Caco-2 (cell line): ENCODE measurements at regions of chr1 and their contacts with region 1.

Region 1: GRCh38 chr1:43991476-43992231 is at the start of gene CCDC24:
- DNase-seq: peak; percentile 84
- H3K4me3 ChIP-seq: peak within 1 kb of the TSS; percentile 57
- H3K4me3 Mint-ChIP-seq: peak within 1 kb of the TSS; percentile 94
- H3K27ac Mint-ChIP-seq: peak within 1 kb of the TSS; percentile 91
- H3K4me1 ChIP-seq: peaks cover 6% of the 10 kb centered on the region; the same call in 1 of the 2 replicates
- H3K4me1 Mint-ChIP-seq: peaks cover 18% of the 10 kb centered on the region
- H3K27me3 ChIP-seq: no peaks in the 10 kb centered on the region
- H3K27me3 Mint-ChIP-seq: no peaks in the 10 kb centered on the region
- CTCF ChIP-seq: no peak
- total RNA-seq, gene CCDC24: 5.1 and 5.2 TPM in 2 replicates

Region 2: DNA sequence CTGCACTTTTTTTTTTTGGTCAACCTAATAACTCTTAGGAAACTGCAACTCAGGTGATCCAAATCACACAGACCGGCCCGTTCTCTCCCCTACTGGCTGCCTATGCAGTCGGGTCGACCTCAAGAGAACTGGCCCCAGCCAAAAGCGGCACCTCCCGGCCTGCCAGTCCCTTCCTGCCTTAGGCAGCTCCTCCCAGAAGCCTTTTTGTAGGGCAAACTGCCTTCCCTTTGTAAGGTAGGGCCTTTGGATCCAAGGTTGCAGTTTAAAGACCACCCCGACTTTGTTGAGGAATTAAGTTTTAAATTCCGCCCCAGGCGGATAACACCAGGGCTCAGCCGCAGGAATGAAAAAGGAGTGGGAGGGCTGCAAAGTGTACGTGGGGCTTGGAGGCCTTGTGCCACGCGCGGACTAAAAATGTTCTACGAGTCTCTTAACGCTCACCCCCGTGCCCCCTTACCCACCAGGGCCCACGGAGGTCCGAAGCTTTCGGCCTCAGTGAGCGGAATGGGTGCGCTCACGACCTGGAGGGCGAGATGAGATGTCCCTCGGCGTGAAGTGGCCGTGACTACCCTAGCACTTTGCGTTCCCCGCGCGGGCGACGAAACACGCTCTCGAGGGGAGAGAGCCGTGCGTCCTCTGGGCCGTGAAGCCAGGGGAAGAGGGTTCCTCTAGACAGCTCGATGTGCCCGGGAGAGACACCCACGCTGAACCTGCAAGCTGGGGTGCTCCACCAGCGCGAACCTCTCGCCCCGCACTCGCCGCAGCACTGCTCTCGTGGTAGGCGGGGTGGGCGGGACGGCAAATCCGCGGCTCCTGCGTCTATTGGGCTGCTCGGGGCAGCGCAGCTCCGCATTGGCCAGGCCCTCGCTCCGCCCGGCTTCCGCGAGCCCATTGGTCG is 284.8 kb before region 1 on chr1:
- CTCF ChIA-PET with region 1: no interaction called
- POLR2A ChIA-PET with region 1: no interaction called
- intact Hi-C with region 1: no loop called
- DNase-seq: peak; percentile 89 to 92
- H3K4me3 ChIP-seq: peak overlapping the region; percentile 67
- H3K4me3 Mint-ChIP-seq: peak overlapping the region; percentile 81
- H3K27ac Mint-ChIP-seq: no peak overlapping the region
- H3K4me1 ChIP-seq: peaks cover 9% of the 10 kb centered on the region
- H3K4me1 Mint-ChIP-seq: peaks cover 7% of the 10 kb centered on the region
- H3K27me3 ChIP-seq: no peaks in the 10 kb centered on the region
- H3K27me3 Mint-ChIP-seq: no peaks in the 10 kb centered on the region
- CTCF ChIP-seq: no peak

Region 3: DNA sequence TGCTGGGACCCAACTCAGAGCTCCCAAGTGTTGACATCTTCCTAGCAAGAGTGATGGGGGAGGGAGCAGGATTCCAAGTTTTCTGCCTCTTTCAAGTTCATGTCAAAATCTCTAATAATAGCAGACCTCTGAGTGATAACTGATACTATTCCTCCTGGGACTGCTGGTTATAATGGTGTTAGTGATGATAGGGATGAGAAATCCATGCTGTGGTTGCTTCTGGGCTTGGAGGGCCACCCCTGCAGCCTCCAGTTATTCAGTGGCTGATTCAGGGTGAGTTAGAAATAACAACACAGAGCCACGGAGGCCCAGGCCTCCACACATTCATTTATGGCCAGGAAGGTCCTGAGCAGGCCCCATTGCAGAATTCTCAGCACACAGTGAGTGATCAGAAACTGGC is 98.6 kb before region 1 on chr1:
- CTCF ChIA-PET with region 1: no interaction called
- POLR2A ChIA-PET with region 1: no interaction called
- intact Hi-C with region 1: no loop called
- DNase-seq: no peak
- H3K4me3 ChIP-seq: no peak overlapping the region
- H3K4me3 Mint-ChIP-seq: no peak overlapping the region
- H3K27ac Mint-ChIP-seq: no peak overlapping the region
- H3K4me1 ChIP-seq: no peaks in the 10 kb centered on the region
- H3K4me1 Mint-ChIP-seq: no peaks in the 10 kb centered on the region
- H3K27me3 ChIP-seq: no peaks in the 10 kb centered on the region
- H3K27me3 Mint-ChIP-seq: no peaks in the 10 kb centered on the region
- CTCF ChIP-seq: no peak

Region 4: DNA sequence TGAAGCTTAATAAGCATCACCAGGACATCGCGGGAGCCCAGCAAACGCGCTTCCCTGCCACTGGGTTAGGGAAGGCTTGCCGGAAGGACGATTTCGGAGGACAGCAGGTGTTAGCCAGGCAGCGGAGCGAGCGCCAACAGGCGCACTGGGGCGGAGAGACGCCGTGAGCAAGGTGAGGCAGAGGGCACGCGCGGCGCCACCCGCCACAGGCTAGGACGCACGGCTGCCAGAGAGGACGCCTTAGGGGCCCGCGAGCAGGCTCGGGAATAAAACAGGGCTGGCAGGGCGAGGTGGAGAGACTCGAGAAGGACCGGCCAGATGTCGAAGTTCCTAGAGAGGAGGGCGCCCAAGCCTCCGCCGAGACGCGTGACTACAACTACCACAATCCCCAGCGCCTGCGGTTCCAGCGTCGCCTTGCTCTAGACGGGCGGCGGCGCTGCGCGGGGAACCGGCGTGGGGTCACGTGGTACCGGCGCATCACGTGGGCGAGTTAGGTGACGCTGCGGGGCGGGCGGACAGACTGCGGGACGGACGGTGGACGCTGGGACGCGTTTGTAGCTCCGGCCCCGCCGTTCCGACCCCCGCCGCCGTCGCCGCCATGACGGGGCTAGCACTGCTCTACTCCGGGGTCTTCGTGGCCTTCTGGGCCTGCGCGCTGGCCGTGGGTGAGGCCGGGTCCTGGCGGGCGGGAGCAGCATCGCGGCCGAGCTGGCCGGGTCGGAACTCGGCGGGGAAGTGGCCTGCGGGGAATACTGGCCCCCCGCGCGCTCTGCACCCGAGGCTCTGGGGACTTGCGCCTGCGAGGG is 17.0 kb before region 1 on chr1 and contains the start of gene ATP6V0B:
- CTCF ChIA-PET with region 1: interaction called, 3 read pairs
- POLR2A ChIA-PET with region 1: no interaction called
- intact Hi-C with region 1: loop called (anchors 2 kb)
- DNase-seq: peak; percentile 91 to 93
- H3K4me3 ChIP-seq: peak within 1 kb of the TSS; percentile 96
- H3K4me3 Mint-ChIP-seq: peak within 1 kb of the TSS; percentile 91
- H3K27ac Mint-ChIP-seq: peak within 1 kb of the TSS; percentile 88
- H3K4me1 ChIP-seq: peaks cover 17% of the 10 kb centered on the region
- H3K4me1 Mint-ChIP-seq: peaks cover 17% of the 10 kb centered on the region
- H3K27me3 ChIP-seq: no peaks in the 10 kb centered on the region
- H3K27me3 Mint-ChIP-seq: no peaks in the 10 kb centered on the region
- CTCF ChIP-seq: peak in 1 of 2 experiments; percentile 23
- total RNA-seq, gene ATP6V0B: 89.9 and 91.2 TPM in 2 replicates

Region 5: DNA sequence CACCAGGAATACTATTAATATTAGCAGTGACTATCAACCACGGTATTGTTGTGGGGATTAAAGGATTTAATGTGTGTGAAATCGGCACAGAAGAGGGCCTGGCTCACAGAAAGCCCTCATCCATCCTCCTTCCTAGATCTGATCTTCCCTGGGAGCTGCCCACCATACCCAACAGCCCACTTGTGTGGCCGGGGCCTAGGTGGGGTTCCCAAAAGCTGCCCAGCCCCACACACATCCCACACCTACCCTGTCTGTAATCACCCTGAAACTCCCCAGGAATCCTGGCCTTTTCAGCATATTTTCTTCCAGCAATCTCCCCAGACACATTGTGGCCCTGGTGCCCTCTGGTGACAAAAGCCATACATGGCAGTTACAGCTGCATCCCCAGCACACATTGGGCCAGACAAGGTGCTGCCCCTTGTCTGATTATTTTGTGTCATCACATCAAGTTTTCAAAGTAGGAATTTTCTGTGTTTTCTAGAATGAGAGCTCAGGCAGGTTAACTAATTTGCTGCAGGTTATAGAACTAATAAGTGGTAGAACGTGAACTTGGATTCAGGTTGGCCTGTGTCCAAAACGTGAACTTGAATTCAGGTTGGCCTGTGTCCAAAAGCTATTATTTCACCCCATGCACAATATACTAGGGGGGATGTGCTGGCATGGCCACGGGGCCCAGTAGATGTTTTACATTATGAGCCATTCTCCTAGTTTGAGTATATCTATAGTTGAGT is 44.9 kb after region 1 on chr1:
- CTCF ChIA-PET with region 1: interaction called, 8 read pairs
- POLR2A ChIA-PET with region 1: no interaction called
- intact Hi-C with region 1: loop called (anchors 2 kb)
- DNase-seq: peak; percentile 66 to 75
- H3K4me3 ChIP-seq: no peak overlapping the region
- H3K4me3 Mint-ChIP-seq: no peak overlapping the region
- H3K27ac Mint-ChIP-seq: peak overlapping the region; percentile 48
- H3K4me1 ChIP-seq: peaks cover 15% of the 10 kb centered on the region
- H3K4me1 Mint-ChIP-seq: peaks cover 16% of the 10 kb centered on the region
- H3K27me3 ChIP-seq: no peaks in the 10 kb centered on the region
- H3K27me3 Mint-ChIP-seq: no peaks in the 10 kb centered on the region
- CTCF ChIP-seq: peak; percentile 59 to 81

Region 6: DNA sequence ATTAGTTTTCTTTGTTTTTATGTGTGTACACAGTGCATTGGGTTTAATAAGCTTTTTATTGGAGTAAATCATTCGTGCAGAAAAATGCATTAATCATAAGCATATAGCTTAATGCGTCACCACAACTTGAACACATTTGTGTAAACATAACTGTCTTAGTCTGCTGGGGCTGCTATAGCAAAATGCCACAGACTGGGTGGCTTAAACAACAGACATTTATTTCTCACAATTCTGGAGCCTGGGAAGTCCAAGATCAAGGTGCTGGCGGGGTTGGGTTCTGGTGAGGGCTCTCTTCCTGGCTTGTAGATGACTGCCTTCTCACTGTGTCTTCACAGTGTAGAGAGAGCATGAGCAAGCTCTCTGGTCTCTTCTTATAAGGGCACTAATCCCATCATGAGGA is 57.2 kb after region 1 on chr1:
- CTCF ChIA-PET with region 1: interaction called, 11 read pairs
- POLR2A ChIA-PET with region 1: no interaction called
- intact Hi-C with region 1: no loop called
- DNase-seq: no peak
- H3K4me3 ChIP-seq: no peak overlapping the region
- H3K4me3 Mint-ChIP-seq: no peak overlapping the region
- H3K27ac Mint-ChIP-seq: no peak overlapping the region
- H3K4me1 ChIP-seq: peaks cover 9% of the 10 kb centered on the region; the same call in 1 of the 2 replicates
- H3K4me1 Mint-ChIP-seq: peaks cover 10% of the 10 kb centered on the region
- H3K27me3 ChIP-seq: no peaks in the 10 kb centered on the region
- H3K27me3 Mint-ChIP-seq: no peaks in the 10 kb centered on the region
- CTCF ChIP-seq: no peak